Common myeloid progenitor, CD34-positive (primary cell): ENCODE measurements at regions of chr2 and their contacts with region 1.

Region 1: DNA sequence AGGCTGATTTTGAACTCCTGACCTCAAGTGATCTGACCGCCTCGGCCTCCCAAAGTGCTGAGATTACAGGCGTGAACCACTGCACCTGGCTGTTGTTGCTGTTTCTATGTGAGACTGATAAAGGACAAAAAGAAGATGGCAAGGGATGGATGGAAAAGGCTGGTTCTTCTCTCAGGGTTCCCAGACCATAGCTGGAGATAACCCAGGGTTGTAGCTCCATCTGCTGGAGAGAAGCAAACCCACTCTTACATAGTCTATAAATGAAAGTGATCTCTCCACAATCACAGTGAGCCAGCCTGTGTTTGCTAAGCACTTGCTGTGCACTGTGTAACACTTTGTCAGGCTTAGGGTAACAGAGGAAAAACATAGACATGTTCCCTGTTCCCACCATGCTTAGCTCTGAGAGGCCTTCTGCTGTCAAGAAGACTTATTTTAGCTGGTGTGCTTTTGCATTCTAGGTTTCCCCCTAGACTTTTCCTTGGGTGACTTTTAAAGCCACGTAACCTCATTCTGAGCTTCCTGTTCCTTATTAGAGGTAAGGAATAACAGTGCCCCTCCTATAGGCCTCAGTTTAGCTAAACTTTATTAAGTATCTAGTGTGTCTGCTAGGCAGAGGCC is 49.7 kb downstream of the LIMS1 start:
- DNase-seq: peak; percentile 77 to 88 (median 85)
- H3K4me3 ChIP-seq: peak overlapping the region in 4 of 7 experiments; percentile 6 to 71 (median 28)
- H3K27ac ChIP-seq: no peak overlapping the region
- H3K4me1 ChIP-seq: peaks cover 24 to 57% (median 39%) of the 10 kb centered on the region in 4 experiments
- H3K27me3 ChIP-seq: no peaks in the 10 kb centered on the region

Region 2: GRCh38 chr2:108351889-108352288 is 232.1 kb before region 1 on chr2:
- CTCF ChIA-PET with region 1: interaction called, 10 read pairs
- POLR2A ChIA-PET with region 1: interaction called, 3 read pairs
- DNase-seq: peak in 2 of 3 donors; percentile 45 to 60
- H3K4me3 ChIP-seq: no peak overlapping the region
- H3K27ac ChIP-seq: no peak overlapping the region
- H3K4me1 ChIP-seq: peaks cover 0 to 7% (median 3%) of the 10 kb centered on the region in 4 experiments
- H3K27me3 ChIP-seq: no peaks in the 10 kb centered on the region